ENCODE measurements at regions of chr14 and their contacts with region 1.

Region 1: DNA sequence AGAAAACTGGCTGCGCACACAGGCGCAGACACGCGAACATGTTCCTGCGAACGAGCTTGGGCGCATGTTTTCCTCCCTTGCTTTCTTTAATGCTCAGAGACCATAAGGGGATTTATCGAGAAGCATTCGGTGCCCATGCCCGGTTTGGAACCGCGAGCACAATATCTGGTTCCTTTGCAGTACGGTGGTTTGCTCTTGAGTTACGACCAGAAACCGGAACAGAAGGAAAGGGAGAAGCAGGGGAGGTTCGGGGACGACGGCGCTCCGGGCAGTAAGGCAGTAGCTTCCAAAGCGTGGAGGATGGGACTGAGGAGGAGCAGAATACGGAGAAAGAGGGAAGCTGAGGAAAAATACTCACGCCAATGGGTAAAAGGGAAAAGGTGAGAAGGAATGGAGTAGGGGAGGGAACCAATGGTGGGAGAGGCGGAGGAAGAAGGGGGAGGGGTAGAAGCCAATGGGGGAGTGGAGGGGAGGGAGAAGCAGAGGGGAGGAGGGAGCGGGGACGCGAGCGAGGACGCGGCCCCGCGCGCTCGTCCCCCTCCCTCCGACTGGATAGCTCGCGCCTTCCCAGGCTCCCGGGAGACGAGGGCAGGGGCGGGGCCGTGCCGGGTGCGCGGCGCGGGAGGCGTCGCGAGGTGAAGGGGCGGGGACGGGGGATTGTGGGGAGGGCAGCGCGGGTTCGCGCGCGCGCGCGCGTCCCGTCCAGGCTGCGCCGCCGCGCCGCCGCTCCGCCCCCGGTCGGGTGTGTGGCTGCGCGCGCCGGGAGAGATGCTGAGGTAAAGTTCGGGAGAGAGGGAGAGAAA is 625 bp upstream of the ARHGAP5 start:
- DNase-seq: peak; percentile 61 to 84 (median 76)
- ATAC-seq: peak; percentile 77
- H3K4me3 ChIP-seq: peak overlapping the region; percentile 99
- H3K4me3 Mint-ChIP-seq: peak overlapping the region; percentile 85 to 100 (median 99)
- H3K27ac ChIP-seq: peak overlapping the region; percentile 71
- H3K27ac Mint-ChIP-seq: peak overlapping the region; percentile 88 to 99 (median 96)
- H3K4me1 ChIP-seq: peaks cover 0 to 4% of the 10 kb centered on the region in 2 donors
- H3K4me1 Mint-ChIP-seq: peaks cover 24 to 51% (median 42%) of the 10 kb centered on the region in 7 donors
- H3K27me3 ChIP-seq: peaks cover 0 to 6% of the 10 kb centered on the region in 2 donors
- H3K27me3 Mint-ChIP-seq: peaks cover 0 to 21% (median 0%) of the 10 kb centered on the region in 5 donors

Region 2: DNA sequence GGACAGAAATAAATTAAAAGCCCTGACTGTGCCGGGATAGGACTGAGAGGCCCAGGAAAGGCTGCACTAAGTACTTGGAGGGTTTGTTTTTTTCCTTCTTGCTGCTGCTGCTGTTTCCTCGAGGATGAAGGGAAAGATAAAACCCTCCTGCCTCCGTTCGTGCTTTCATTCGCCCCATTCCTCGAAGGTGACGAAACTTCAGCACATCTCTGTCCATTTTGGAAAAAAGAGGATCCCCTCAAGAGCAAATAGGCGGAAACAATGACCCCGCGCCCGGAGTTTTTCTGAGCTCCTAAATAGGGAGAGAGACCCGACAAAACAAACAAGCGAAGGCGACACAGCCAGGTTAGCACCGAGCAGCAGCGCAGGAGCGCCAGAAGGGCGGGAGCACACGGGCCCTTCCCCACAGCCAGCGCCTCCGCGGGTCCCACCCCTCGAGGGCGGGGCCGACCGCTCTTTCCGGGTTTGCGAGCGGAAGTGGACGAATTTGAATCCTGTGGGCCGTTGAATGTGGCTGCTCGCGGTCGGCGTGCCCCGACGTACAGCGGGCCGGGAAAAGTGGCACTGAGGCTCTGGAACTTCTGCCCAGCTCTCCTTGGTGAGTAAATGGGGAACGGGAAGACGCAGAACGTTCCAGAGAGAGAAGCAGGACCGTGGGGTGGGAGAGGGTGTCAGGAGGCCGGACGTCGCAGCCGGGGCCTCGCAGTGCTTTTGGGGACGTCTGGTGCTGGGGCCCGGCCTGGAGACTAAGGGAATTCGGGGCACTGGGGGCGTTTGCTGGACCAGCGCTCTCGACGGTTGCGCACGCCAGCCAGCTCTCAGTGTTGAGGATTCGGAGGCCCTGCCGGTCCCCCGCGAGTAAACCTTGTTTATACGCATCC is 1517.6 kb before region 1 on chr14 and contains the start of gene G2E3:
- CTCF ChIA-PET with region 1: no interaction called
- POLR2A ChIA-PET with region 1: no interaction called
- intact Hi-C with region 1: loop called (anchors 2 to 10 kb)
- DNase-seq: peak; percentile 75 to 91 (median 85)
- ATAC-seq: peak; percentile 100
- H3K4me3 ChIP-seq: peak within 1 kb of the TSS; percentile 76
- H3K4me3 Mint-ChIP-seq: peak within 1 kb of the TSS; percentile 97 to 100 (median 99)
- H3K27ac ChIP-seq: peak within 1 kb of the TSS; percentile 77
- H3K27ac Mint-ChIP-seq: peak within 1 kb of the TSS; percentile 93 to 100 (median 98)
- H3K4me1 ChIP-seq: peaks cover 5 to 12% of the 10 kb centered on the region in 2 donors
- H3K4me1 Mint-ChIP-seq: peaks cover 24 to 43% (median 28%) of the 10 kb centered on the region in 7 donors
- H3K27me3 ChIP-seq: no peaks in the 10 kb centered on the region
- H3K27me3 Mint-ChIP-seq: peaks cover 0 to 4% (median 0%) of the 10 kb centered on the region in 5 donors
- total RNA-seq, gene G2E3: 25.0 to 29.7 (median 28.6) TPM

Region 3: DNA sequence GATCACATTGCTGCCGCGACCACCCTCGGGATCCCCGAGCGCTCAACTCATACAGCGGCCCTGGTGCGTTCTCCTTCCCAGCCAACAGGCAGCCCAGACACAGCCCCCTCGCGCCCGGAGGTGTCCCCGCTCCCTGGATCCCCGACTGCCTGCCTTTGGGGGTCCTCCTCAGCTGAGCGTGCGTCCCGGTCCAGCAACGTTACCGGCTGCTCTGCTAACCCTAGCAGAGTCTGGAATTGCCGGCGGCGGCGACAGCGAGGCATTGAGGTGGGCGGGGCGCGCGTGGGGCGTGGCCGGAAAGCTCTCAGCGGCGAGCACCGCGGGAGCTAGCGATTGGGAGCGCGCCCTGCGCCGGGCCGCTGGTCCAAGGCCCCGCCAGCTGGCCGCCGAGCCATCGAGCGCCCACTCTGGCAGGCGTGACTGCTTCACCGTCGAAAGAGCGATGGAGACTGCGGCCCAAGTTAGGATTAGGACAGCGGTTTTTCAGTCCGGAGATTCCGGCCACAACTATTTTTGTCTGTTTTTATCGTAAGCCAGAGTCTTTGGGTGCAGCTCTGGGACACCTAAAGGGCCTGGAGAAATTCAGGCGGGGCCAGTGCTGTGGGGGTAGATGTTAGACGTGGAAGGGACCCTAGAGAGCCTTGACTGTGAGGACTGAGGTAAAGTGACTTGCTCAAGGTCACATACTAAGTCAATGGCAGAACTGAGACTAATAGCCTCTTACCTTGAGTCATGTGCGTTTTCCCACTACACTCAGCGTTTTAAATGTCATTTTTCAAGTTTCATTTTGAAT is 656.0 kb before region 1 on chr14 and contains the start of gene HEATR5A:
- CTCF ChIA-PET with region 1: no interaction called
- POLR2A ChIA-PET with region 1: interaction called, 4 read pairs
- intact Hi-C with region 1: loop called (anchors 1 kb)
- DNase-seq: peak; percentile 84 to 93 (median 90)
- ATAC-seq: peak; percentile 99
- H3K4me3 ChIP-seq: peak within 1 kb of the TSS; percentile 99
- H3K4me3 Mint-ChIP-seq: peak within 1 kb of the TSS; percentile 94 to 99 (median 98)
- H3K27ac ChIP-seq: peak within 1 kb of the TSS; percentile 83
- H3K27ac Mint-ChIP-seq: peak within 1 kb of the TSS; percentile 82 to 97 (median 92)
- H3K4me1 ChIP-seq: peaks cover 6 to 8% of the 10 kb centered on the region in 2 donors
- H3K4me1 Mint-ChIP-seq: peaks cover 20 to 35% (median 25%) of the 10 kb centered on the region in 7 donors
- H3K27me3 ChIP-seq: no peaks in the 10 kb centered on the region
- H3K27me3 Mint-ChIP-seq: peaks cover 0 to 7% (median 0%) of the 10 kb centered on the region in 5 donors
- total RNA-seq, gene HEATR5A: 7.7 to 14.4 (median 13.2) TPM

Region 4: DNA sequence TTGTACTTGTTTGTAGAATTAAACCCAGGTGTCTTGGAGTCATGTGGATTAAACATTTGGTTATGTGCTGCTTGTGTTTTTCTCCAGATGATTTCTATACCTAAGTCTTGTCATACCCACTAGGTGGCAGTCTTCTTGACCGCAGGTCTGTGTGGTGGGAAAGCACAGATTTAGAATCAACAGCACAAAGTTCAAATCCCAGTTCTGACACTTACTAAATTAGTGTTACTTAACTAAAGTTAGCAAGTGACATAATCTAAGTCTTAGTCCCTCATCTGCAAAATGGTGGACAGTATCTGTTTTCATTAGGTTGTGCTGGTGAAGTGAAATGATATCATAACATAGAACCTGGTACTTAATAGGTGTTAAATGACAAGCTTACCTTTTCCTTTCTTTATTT is 150.4 kb before region 1 on chr14:
- CTCF ChIA-PET with region 1: interaction called, 17 read pairs
- POLR2A ChIA-PET with region 1: interaction called, 4 read pairs
- intact Hi-C with region 1: loop called (anchors 1 kb)
- DNase-seq: peak in 7 of 9 donors; percentile 20 to 54 (median 44)
- ATAC-seq: peak; percentile 67
- H3K4me3 ChIP-seq: no peak overlapping the region
- H3K4me3 Mint-ChIP-seq: no peak overlapping the region
- H3K27ac ChIP-seq: no peak overlapping the region
- H3K27ac Mint-ChIP-seq: no peak overlapping the region
- H3K4me1 ChIP-seq: no peaks in the 10 kb centered on the region
- H3K4me1 Mint-ChIP-seq: peaks cover 7 to 18% (median 11%) of the 10 kb centered on the region in 7 donors
- H3K27me3 ChIP-seq: no peaks in the 10 kb centered on the region
- H3K27me3 Mint-ChIP-seq: no peaks in the 10 kb centered on the region

Region 5: DNA sequence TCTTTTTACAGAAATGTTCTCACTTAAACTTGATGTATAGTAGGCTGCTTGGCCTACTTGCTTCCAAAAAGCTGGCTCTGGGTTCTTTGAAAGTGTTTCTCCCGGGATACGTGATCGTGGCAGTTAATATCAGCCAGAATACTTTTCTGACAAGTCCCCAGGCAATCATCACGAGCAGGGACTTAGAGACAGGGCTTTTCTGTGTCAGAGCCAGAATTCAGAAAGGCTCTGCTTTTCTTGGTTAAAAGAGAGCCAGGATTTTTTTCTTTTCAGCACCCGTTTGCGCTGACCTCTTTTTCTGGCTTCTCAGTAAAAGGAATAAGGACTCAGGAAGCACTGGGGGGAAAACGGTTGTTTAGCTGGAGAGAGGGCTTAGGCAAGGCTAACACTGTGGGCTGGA is 57.2 kb before region 1 on chr14:
- CTCF ChIA-PET with region 1: no interaction called
- POLR2A ChIA-PET with region 1: no interaction called
- intact Hi-C with region 1: no loop called
- DNase-seq: no peak
- ATAC-seq: no peak
- H3K4me3 ChIP-seq: no peak overlapping the region
- H3K4me3 Mint-ChIP-seq: no peak overlapping the region
- H3K27ac ChIP-seq: no peak overlapping the region
- H3K27ac Mint-ChIP-seq: no peak overlapping the region
- H3K4me1 ChIP-seq: no peaks in the 10 kb centered on the region
- H3K4me1 Mint-ChIP-seq: no peaks in the 10 kb centered on the region
- H3K27me3 ChIP-seq: peaks cover 0 to 3% of the 10 kb centered on the region in 2 donors
- H3K27me3 Mint-ChIP-seq: no peaks in the 10 kb centered on the region

Region 6: GRCh38 chr14:32102152-32102787 is 25.8 kb after region 1 on chr14:
- CTCF ChIA-PET with region 1: no interaction called
- POLR2A ChIA-PET with region 1: interaction called, 9 read pairs
- intact Hi-C with region 1: loop called (anchors 1 kb)
- DNase-seq: peak in 7 of 9 donors; percentile 9 to 57 (median 39)
- ATAC-seq: peak; percentile 91
- H3K4me3 ChIP-seq: no peak overlapping the region
- H3K4me3 Mint-ChIP-seq: peak overlapping the region; percentile 38 to 72 (median 62)
- H3K27ac ChIP-seq: peak overlapping the region; percentile 22
- H3K27ac Mint-ChIP-seq: peak overlapping the region; percentile 79 to 93 (median 89)
- H3K4me1 ChIP-seq: peaks cover 11 to 27% of the 10 kb centered on the region in 2 donors
- H3K4me1 Mint-ChIP-seq: peaks cover 18 to 74% (median 58%) of the 10 kb centered on the region in 7 donors
- H3K27me3 ChIP-seq: no peaks in the 10 kb centered on the region
- H3K27me3 Mint-ChIP-seq: no peaks in the 10 kb centered on the region

Region 7: GRCh38 chr14:32252030-32252670 is 175.7 kb after region 1 on chr14:
- CTCF ChIA-PET with region 1: interaction called, 125 read pairs
- POLR2A ChIA-PET with region 1: interaction called, 6 read pairs
- intact Hi-C with region 1: loop called (anchors 1 kb)
- DNase-seq: peak in 8 of 9 donors; percentile 27 to 77 (median 69)
- ATAC-seq: peak; percentile 93
- H3K4me3 ChIP-seq: no peak overlapping the region
- H3K4me3 Mint-ChIP-seq: no peak overlapping the region
- H3K27ac ChIP-seq: no peak overlapping the region
- H3K27ac Mint-ChIP-seq: no peak overlapping the region
- H3K4me1 ChIP-seq: no peaks in the 10 kb centered on the region
- H3K4me1 Mint-ChIP-seq: no peaks in the 10 kb centered on the region
- H3K27me3 ChIP-seq: no peaks in the 10 kb centered on the region
- H3K27me3 Mint-ChIP-seq: no peaks in the 10 kb centered on the region

Measured in naive thymus-derived CD4-positive, alpha-beta T cell (primary cell).